Activated T-helper 1 cell treated with anti-CD3 and anti-CD28 coated beads, Interleukin-12 subunit alpha, Interleukin-12 subunit beta, Interleukin-2, Interleukin-4 antibody, amounts not matched to agents 30 ng/mL and 10 ng/mL and 1 ng/mL, durations not matched to agents 14 hours and 24 hours and 36 hours (primary cell): ENCODE measurements at regions of chr5 and their contacts with region 1.

Region 1: DNA sequence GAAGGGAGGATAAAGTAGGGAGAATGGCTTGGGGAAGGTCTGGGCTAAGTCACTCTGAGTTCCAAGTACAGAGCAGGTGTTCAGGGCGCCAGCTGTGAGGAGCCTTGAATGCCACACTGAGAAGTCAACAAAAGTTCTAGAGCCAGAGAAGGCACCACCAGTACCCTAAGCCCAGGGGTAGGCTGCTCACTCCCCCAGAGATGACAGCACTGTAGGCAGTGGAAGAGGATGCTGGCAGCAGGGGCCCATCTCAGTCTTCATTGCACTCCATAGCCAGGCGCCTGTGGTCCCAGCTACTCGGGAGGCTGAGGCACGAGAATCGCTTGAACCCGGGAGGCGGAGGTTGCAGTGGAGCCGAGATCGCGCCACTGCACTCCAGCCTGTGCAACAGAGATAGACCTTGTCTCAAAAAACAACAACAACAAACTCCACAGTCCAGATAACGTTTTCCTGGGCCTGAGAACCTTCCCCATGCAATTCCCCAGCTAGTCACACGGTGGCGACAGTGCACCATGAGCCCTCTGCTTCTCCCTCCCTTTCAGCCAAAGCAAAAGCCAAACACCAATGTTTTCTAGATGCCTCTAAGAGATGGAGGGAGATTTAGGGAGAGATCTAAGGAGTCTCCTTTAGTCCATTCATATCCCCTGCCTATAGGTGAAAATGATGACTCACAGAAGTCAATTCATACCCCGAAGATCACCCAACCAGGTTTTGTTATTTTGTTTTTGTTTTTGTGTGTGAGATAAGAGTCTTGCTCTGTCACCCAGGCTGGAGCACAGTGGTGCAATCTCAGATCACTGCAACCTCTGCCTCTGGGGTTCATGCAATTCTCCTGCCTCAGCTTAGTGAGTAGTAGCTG is 19.8 kb upstream of the NSD1 start:
- DNase-seq: peak; percentile 70
- H3K4me3 Mint-ChIP-seq: no peak overlapping the region
- H3K27ac Mint-ChIP-seq: peak overlapping the region; percentile 35
- H3K4me1 Mint-ChIP-seq: peaks cover 25% of the 10 kb centered on the region
- H3K27me3 Mint-ChIP-seq: no peaks in the 10 kb centered on the region

Region 2: DNA sequence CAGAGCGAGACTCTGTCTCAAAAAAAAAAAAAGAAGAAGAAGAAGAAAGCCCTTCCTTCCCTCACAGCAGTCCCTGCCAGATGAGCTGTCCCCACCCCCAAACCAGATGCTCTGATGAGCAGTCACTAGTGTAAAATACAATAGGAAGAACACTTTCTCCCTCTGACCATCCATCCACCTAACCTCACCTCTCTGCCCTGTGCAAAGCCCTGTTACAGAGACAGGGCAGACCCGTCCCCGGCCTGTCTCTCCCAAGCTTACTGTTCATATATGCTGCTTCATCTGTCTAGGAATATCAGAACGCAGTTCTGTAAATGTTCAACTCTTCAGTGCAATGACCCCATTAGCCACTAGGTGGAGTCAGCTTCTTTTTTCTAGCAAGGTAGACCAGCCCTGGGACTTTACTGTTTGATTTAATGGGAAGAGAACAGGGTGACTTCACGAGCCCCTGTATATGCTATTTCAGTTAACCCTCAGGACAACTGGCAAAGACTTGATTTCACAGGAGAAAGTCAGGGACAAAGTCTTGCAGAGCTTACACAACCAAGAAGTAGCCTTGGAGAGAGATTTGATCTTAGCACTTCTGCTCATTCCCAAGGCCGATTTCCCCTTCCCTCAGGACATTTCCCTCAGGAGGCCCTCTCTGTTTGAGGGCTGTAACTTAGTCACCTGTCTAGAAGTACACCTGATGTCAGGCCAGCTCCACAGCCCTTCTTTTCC is 42.0 kb before region 1 on chr5:
- intact Hi-C with region 1: loop called (anchors 1 kb)
- DNase-seq: peak; percentile 49
- H3K4me3 Mint-ChIP-seq: no peak overlapping the region
- H3K27ac Mint-ChIP-seq: no peak overlapping the region
- H3K4me1 Mint-ChIP-seq: peaks cover 5% of the 10 kb centered on the region
- H3K27me3 Mint-ChIP-seq: no peaks in the 10 kb centered on the region

Region 3: GRCh38 chr5:177133091-177133852 is 19.5 kb after region 1 on chr5 and contains the start of gene NSD1:
- intact Hi-C with region 1: loop called (anchors 1 kb)
- DNase-seq: peak; percentile 90
- H3K4me3 Mint-ChIP-seq: peak within 1 kb of the TSS; percentile 93
- H3K27ac Mint-ChIP-seq: peak within 1 kb of the TSS; percentile 86
- H3K4me1 Mint-ChIP-seq: peaks cover 48% of the 10 kb centered on the region
- H3K27me3 Mint-ChIP-seq: no peaks in the 10 kb centered on the region
- total RNA-seq, gene NSD1: 108 and 112 TPM in 2 replicates

Region 4: DNA sequence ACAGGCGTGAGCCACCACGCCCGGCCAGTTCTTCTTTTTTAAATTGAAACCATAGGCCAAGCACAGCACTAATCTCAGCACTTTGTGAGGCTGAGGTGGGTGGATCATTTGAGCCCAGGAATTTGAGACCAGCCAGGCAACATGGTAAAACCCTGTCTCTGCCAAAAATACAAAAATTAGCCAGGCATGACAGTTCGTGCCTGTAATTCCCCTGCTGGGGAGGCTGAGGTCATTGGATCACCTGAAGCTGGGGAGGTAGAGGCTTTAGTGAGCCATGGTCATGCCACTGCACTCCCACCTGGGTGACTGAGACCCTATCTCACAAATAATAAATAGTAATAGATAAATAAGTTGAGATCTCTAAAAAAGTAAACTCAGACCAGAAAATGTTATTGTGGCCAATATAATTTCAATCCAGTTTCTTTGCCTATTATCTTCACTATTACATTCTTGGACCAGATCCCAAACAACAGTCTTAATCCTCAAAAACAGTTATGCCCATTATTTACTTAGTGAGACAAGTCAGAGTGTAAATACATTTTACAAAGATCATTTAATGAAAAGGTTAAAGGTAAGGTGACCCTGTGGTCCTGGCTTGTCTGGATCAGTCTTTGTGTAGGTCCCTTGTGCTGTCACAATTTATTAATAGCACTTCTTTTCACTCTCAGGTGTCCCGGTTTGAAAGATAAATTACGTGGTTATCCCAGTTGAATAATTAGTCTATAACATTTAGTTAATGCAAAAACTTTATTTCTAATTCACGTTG is 136.1 kb after region 1 on chr5:
- intact Hi-C with region 1: loop called (anchors 5 kb)
- DNase-seq: no peak
- H3K4me3 Mint-ChIP-seq: no peak overlapping the region
- H3K27ac Mint-ChIP-seq: no peak overlapping the region
- H3K4me1 Mint-ChIP-seq: no peaks in the 10 kb centered on the region
- H3K27me3 Mint-ChIP-seq: no peaks in the 10 kb centered on the region